Activated CD4-positive, alpha-beta T cell treated with anti-CD3 and anti-CD28 coated beads for 36 hours (primary cell): ENCODE measurements at regions of chr14 and their contacts with region 1.

Region 1: GRCh38 chr14:60064491-60065072 is 27.1 kb upstream of the PCNX4 start:
- DNase-seq: no peak
- ATAC-seq: no peak
- H3K4me3 Mint-ChIP-seq: no peak overlapping the region
- H3K27ac Mint-ChIP-seq: no peak overlapping the region
- H3K4me1 Mint-ChIP-seq: no peaks in the 10 kb centered on the region
- H3K27me3 Mint-ChIP-seq: peaks cover 3% of the 10 kb centered on the region

Region 2: GRCh38 chr14:60561845-60562746 is 497.5 kb after region 1 on chr14:
- CTCF ChIA-PET with region 1: no interaction called
- POLR2A ChIA-PET with region 1: no interaction called
- intact Hi-C with region 1: loop called in 1 of 2 experiments (anchors 10 kb)
- DNase-seq: peak; percentile 60
- ATAC-seq: peak; percentile 49
- H3K4me3 Mint-ChIP-seq: no peak overlapping the region
- H3K27ac Mint-ChIP-seq: no peak overlapping the region
- H3K4me1 Mint-ChIP-seq: no peaks in the 10 kb centered on the region
- H3K27me3 Mint-ChIP-seq: peaks cover 1% of the 10 kb centered on the region